ENCODE measurements at regions of chr2 and their contacts with region 1.

Region 1: GRCh38 chr2:229190186-229190585 is 80.9 kb downstream of the PID1 start:
- DNase-seq: no peak
- H3K4me3 ChIP-seq: no peak overlapping the region
- CTCF ChIP-seq: no peak
- POLR2A ChIP-seq: no peak

Region 2: DNA sequence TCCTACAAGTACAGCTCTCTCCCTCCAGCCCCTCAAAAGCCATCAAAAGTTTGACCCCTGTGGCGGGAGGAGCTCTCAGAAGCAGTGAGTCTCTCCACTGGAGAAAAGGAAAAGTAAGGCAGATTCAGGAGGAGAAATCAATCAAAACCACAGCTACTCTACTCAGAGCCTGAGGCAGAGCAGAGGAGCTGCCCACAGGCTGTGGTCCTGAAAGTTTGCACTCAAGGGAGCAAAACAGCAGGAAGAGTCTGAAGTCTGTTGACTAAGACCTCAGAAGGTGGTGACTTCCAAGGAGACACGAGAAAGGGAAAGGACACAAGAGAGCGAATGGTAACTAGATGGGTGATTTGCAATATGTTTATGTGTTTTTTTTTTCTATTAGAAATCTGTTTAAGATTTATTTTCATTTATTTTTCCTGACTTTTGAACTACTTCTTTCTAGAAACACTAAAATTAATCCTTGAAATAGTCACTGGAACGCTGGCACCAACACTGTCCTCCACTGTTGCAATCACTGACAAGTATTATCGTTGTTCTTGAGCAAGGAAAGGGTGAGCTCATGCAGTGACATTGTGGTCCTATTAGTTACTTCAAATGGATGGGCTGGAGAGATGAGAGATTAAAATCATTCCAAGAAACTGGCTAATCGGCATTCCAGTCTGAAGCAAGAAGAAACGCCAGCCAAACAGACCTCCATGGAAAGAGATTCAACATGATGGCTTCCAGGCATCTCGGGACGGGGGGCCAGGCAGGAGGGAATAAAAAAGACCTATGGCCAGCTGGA is 45.1 kb after region 1 on chr2:
- intact Hi-C with region 1: loop called (anchors 2 kb)
- DNase-seq: peak in 1 of 2 donors; percentile 40
- H3K4me3 ChIP-seq: no peak overlapping the region
- CTCF ChIP-seq: no peak
- POLR2A ChIP-seq: no peak

Region 3: GRCh38 chr2:230335451-230335863 is 1145.3 kb after region 1 on chr2:
- intact Hi-C with region 1: no loop called
- DNase-seq: no peak
- H3K4me3 ChIP-seq: no peak overlapping the region
- CTCF ChIP-seq: no peak
- POLR2A ChIP-seq: no peak

Region 4: GRCh38 chr2:230347659-230348305 is 1157.6 kb after region 1 on chr2:
- intact Hi-C with region 1: no loop called
- DNase-seq: no peak
- H3K4me3 ChIP-seq: no peak overlapping the region
- CTCF ChIP-seq: no peak
- POLR2A ChIP-seq: no peak

Measured in lower leg skin (tissue), 4 donors.